CD4-positive, alpha-beta memory T cell (primary cell): ENCODE measurements at regions of chr22 and their contacts with region 1.

Region 1: GRCh38 chr22:21952586-21953571 is at the start of gene PPM1F:
- DNase-seq: peak; percentile 80 to 96 (median 91)
- H3K4me3 ChIP-seq: peak within 1 kb of the TSS; percentile 37 to 70
- H3K4me3 Mint-ChIP-seq: peak within 1 kb of the TSS; percentile 82 to 90 (median 85)
- H3K27ac ChIP-seq: peak within 1 kb of the TSS; percentile 46
- H3K27ac Mint-ChIP-seq: peak within 1 kb of the TSS; percentile 46 to 86 (median 77)
- H3K4me1 ChIP-seq: peaks cover 24% of the 10 kb centered on the region
- H3K4me1 Mint-ChIP-seq: peaks cover 8 to 28% (median 11%) of the 10 kb centered on the region in 4 donors
- H3K27me3 ChIP-seq: no peaks in the 10 kb centered on the region
- H3K27me3 Mint-ChIP-seq: no peaks in the 10 kb centered on the region
- total RNA-seq, gene PPM1F: 23.3 to 25.4 TPM

Region 2: DNA sequence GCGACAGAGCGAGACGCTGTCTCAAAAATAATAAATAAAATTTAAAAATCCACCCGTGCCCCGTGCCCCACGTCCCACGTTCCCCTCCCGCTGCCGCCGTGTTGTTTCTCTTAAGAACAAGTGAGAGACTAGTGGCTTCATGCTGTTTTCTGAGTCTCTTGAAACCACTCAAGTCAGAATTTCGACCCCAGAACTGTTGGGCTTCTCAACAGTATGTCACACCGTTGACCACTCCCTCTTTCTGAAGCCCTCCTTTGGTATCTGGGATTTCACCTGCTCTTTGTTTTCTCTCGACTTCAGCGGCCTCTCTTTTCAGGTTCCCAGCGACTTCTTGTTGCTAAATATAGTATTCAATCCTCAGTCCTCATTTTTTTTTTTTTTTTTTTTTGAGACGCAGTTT is 286.1 kb before region 1 on chr22:
- CTCF ChIA-PET with region 1: no interaction called
- POLR2A ChIA-PET with region 1: no interaction called
- intact Hi-C with region 1: no loop called
- DNase-seq: no peak
- H3K4me3 ChIP-seq: peak overlapping the region; percentile 43 to 97
- H3K4me3 Mint-ChIP-seq: peak overlapping the region; percentile 89 to 100 (median 97)
- H3K27ac ChIP-seq: peak overlapping the region; percentile 83
- H3K27ac Mint-ChIP-seq: peak overlapping the region; percentile 52 to 99 (median 76)
- H3K4me1 ChIP-seq: peaks cover 25% of the 10 kb centered on the region
- H3K4me1 Mint-ChIP-seq: peaks cover 19 to 45% (median 32%) of the 10 kb centered on the region in 4 donors
- H3K27me3 ChIP-seq: no peaks in the 10 kb centered on the region
- H3K27me3 Mint-ChIP-seq: no peaks in the 10 kb centered on the region

Region 3: GRCh38 chr22:21938071-21938822 is 14.6 kb before region 1 on chr22:
- CTCF ChIA-PET with region 1: interaction called, 85 read pairs
- POLR2A ChIA-PET with region 1: interaction called, 21 read pairs
- intact Hi-C with region 1: loop called (anchors 2 kb)
- DNase-seq: peak; percentile 83 to 88 (median 84)
- H3K4me3 ChIP-seq: peak overlapping the region; percentile 24 to 75
- H3K4me3 Mint-ChIP-seq: peak overlapping the region; percentile 70 to 89 (median 84)
- H3K27ac ChIP-seq: peak overlapping the region; percentile 63
- H3K27ac Mint-ChIP-seq: peak overlapping the region; percentile 64 to 95 (median 83)
- H3K4me1 ChIP-seq: peaks cover 26% of the 10 kb centered on the region
- H3K4me1 Mint-ChIP-seq: peaks cover 16 to 58% (median 29%) of the 10 kb centered on the region in 4 donors
- H3K27me3 ChIP-seq: no peaks in the 10 kb centered on the region
- H3K27me3 Mint-ChIP-seq: no peaks in the 10 kb centered on the region